Heart left ventricle (tissue), 16 donors: ENCODE measurements at regions of chr18 and their contacts with region 1.

Region 1: DNA sequence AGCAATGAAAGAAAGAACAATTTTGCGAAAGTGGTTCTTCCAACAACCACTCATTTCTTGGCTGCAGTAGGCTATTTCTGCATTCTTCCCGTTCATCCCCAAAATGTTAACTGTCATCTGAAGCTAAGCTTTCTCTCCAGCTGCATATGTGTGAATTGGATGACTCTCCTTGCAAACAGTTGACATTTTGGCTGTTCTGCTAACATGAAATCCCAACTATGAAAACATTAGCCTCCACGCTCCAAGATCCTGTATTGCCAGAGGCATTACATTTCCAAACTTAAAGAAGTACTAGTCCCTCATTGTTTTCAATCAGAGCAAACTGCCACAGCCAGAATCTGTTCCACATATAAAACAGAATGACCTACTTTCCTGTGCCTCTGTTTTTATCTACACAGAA is 88.5 kb downstream of the TGIF1 start:
- DNase-seq: no peak
- ATAC-seq: no peak
- H3K4me3 ChIP-seq: no peak overlapping the region
- H3K27ac ChIP-seq: no peak overlapping the region
- H3K4me1 ChIP-seq: peaks cover 0 to 3% (median 0%) of the 10 kb centered on the region in 12 donors
- H3K27me3 ChIP-seq: no peaks in the 10 kb centered on the region
- CTCF ChIP-seq: no peak
- POLR2A ChIP-seq: no peak

Region 2: DNA sequence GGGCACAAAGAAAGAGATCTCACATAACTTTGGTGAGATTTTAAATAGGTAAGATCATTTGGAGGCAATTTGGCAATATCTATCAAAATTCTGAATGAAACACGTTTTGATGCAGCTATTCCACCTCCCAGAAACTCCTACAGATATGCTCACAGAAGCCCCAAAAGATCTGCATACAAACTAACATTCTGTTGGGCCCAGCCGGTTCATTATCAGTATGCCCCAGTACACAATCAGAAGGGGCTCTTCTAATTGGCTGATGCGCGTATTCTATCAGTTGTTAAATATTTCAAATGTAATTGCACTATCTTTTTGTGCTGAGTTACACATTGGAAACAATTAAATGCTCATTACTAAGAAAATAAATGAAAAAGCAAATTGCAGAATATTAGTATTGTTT is 95.5 kb before region 1 on chr18:
- intact Hi-C with region 1: no loop called
- DNase-seq: no peak
- ATAC-seq: no peak
- H3K4me3 ChIP-seq: no peak overlapping the region
- H3K27ac ChIP-seq: no peak overlapping the region
- H3K4me1 ChIP-seq: peaks cover 0 to 18% (median 7%) of the 10 kb centered on the region in 12 donors
- H3K27me3 ChIP-seq: no peaks in the 10 kb centered on the region
- CTCF ChIP-seq: no peak
- POLR2A ChIP-seq: no peak

Region 3: GRCh38 chr18:3454365-3455089 is 83.9 kb before region 1 on chr18:
- intact Hi-C with region 1: no loop called
- DNase-seq: peak in 2 of 5 donors; percentile 35 to 48
- ATAC-seq: no peak
- H3K4me3 ChIP-seq: peak overlapping the region in 11 of 12 donors; percentile 8 to 93 (median 77)
- H3K27ac ChIP-seq: peak overlapping the region; percentile 36 to 100 (median 97)
- H3K4me1 ChIP-seq: peaks cover 0 to 53% (median 20%) of the 10 kb centered on the region in 12 donors
- H3K27me3 ChIP-seq: no peaks in the 10 kb centered on the region
- CTCF ChIP-seq: peak; percentile 49 to 84 (median 73)
- POLR2A ChIP-seq: no peak

Region 4: GRCh38 chr18:3472681-3473544 is 65.5 kb before region 1 on chr18:
- intact Hi-C with region 1: loop called in 2 of 10 experiments (anchors 10 kb)
- DNase-seq: no peak
- ATAC-seq: no peak
- H3K4me3 ChIP-seq: no peak overlapping the region
- H3K27ac ChIP-seq: no peak overlapping the region
- H3K4me1 ChIP-seq: peaks cover 0 to 8% (median 0%) of the 10 kb centered on the region in 12 donors
- H3K27me3 ChIP-seq: no peaks in the 10 kb centered on the region
- CTCF ChIP-seq: no peak
- POLR2A ChIP-seq: no peak

Region 5: GRCh38 chr18:3652380-3653262 is 114.2 kb after region 1 on chr18:
- intact Hi-C with region 1: loop called in 1 of 10 experiments (anchors 10 kb)
- DNase-seq: peak; percentile 27 to 93 (median 44)
- ATAC-seq: peak; percentile 66 to 96 (median 90)
- H3K4me3 ChIP-seq: no peak overlapping the region
- H3K27ac ChIP-seq: peak overlapping the region in 5 of 12 donors; percentile 14 to 69 (median 53)
- H3K4me1 ChIP-seq: peaks cover 0 to 48% (median 5%) of the 10 kb centered on the region in 12 donors
- H3K27me3 ChIP-seq: no peaks in the 10 kb centered on the region
- CTCF ChIP-seq: no peak
- POLR2A ChIP-seq: no peak